Sigmoid colon (tissue), 7 donors: ENCODE measurements at regions of chr3 and their contacts with region 1.

Region 1: DNA sequence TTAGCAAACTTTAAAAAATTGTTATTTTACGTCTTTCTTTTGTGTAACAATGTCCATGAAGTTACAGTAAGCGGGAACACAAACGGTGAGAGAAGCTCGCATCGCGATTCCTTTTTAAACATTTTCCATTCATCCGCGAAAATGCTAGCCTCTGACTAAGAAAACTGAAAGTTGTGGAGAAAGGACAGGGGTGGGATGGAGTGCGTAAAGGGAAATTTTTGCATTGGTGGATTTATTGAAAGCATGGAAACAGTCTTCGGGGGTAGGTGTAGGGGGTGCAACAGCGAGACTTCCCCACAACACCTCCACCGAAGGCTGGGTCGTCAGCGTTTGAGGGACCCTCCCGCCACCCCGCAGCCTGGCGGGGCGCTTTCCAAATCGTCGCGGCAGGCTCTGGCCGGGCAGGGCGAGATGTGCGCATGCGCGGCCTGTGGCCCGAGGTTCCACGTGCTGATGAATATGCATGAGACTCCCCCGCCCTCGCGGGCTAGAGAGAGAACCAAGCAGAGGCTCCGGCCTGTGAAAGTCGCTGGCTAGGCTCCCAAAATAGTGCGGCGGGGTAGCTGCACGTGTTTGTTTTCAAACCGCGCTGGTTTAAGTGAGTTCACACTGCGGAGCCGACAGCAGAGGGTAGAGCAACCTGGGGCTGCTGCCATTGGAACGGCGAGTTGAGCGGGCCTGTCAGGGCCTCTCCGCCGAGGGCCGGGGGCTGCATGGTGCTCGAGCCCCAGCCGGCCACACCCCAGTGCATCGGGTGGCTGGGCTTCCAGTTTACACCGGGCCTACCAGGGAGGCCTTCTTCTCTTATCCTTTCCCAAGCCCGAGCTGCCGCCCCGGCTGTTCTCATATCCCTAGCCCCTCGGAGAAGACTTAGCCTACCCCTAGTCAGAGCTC is 9.9 kb downstream of the ZIC1 start:
- DNase-seq: no peak
- H3K4me3 ChIP-seq: peak overlapping the region in 2 of 4 donors; percentile 2 to 28
- H3K27ac ChIP-seq: no peak overlapping the region
- H3K4me1 ChIP-seq: peaks cover 0 to 34% (median 25%) of the 10 kb centered on the region in 4 donors
- H3K27me3 ChIP-seq: peaks cover 74 to 100% (median 96%) of the 10 kb centered on the region in 3 donors
- CTCF ChIP-seq: no peak
- EP300 ChIP-seq: no peak
- POLR2A ChIP-seq: no peak

Region 2: GRCh38 chr3:147099076-147099475 is 320.0 kb before region 1 on chr3:
- intact Hi-C with region 1: no loop called
- DNase-seq: no peak
- H3K4me3 ChIP-seq: no peak overlapping the region
- H3K27ac ChIP-seq: no peak overlapping the region
- H3K4me1 ChIP-seq: no peaks in the 10 kb centered on the region
- H3K27me3 ChIP-seq: no peaks in the 10 kb centered on the region
- CTCF ChIP-seq: no peak
- EP300 ChIP-seq: no peak
- POLR2A ChIP-seq: no peak

Region 3: DNA sequence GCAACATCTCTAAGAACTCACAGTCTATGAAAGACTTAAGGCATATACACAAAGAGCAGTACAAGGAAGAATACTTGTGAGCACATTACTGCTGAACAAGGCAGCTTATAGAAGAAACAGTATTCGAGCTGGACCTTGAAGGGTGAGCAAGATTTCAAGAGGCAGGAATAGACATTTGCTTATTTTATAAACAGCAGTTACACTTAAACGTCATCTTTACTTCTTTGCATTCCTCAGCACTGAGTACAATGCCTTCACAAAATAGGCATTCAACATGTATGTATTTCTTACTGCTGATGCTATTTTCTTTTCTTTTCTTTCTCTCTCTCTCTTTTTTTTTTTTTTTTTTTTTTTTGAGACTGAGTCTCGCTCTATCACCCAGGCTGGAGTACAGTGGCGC is 218.5 kb before region 1 on chr3:
- intact Hi-C with region 1: no loop called
- DNase-seq: no peak
- H3K4me3 ChIP-seq: no peak overlapping the region
- H3K27ac ChIP-seq: no peak overlapping the region
- H3K4me1 ChIP-seq: peaks cover 0 to 3% (median 0%) of the 10 kb centered on the region in 4 donors
- H3K27me3 ChIP-seq: no peaks in the 10 kb centered on the region
- CTCF ChIP-seq: no peak
- EP300 ChIP-seq: no peak
- POLR2A ChIP-seq: no peak

Region 4: DNA sequence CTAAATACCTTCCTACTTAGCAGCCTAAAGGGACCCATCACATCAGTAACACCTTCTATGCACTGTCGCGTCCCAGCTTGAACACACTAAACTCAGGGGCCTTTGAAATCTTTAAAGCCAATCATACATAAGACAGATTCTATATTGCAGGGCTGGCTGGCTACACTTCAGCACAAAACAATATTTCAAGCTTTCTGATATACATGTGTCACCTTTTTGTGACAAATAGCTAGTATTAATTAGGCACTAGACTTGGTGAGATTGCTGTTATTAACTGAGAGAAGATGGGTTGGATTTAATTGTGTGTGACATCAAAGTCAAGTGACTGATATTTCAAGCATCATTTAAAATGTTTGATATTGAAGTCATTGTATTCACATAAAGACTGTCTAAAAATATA is 161.1 kb before region 1 on chr3:
- intact Hi-C with region 1: no loop called
- DNase-seq: no peak
- H3K4me3 ChIP-seq: no peak overlapping the region
- H3K27ac ChIP-seq: no peak overlapping the region
- H3K4me1 ChIP-seq: peaks cover 0 to 13% (median 2%) of the 10 kb centered on the region in 4 donors
- H3K27me3 ChIP-seq: no peaks in the 10 kb centered on the region
- CTCF ChIP-seq: no peak
- EP300 ChIP-seq: no peak
- POLR2A ChIP-seq: no peak

Region 5: DNA sequence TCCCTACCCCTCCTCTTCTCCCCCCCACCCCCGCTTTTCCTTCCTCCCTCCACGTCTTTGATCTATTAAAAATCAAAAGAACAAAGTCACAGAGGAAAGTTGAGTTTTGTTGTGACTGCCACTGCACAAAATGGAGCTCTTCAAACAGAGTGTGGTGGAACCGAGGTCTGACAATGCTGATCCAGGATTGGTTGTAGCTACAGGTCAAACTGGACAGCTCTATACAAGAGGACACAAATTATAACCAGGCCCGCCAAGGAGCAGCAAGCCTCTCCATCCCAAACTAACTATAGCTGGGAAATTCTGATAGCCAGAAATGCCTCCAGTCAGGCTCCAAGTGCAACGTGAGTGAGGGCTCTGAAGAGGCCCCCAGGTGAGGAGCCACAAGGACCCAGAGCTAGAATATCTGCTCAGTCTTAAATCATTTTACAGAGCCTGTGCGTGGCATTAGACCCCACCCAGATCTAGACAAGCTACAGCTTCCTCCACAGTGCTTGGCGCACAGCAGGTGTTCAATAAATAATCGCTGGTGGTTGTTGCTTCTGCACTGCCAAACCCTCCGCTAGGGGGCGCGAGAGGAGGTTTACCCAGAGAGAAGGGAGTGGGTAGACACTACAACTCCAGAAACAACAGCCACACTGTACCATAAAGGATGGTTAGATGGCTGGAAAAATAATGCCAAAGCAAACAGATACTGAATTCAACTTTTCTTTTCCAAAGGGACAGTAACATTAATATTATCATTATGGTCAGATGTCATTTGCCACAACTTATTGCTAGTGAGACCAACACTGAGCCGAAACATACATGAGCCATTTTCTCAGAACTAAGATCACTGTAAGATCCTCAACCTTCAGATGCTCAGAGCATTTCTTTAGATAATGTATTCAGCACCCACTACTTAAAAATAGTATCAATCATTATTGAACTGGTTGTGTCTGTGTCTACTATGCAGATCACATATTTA is 57.3 kb before region 1 on chr3:
- intact Hi-C with region 1: loop called (anchors 5 kb)
- DNase-seq: no peak
- H3K4me3 ChIP-seq: no peak overlapping the region
- H3K27ac ChIP-seq: no peak overlapping the region
- H3K4me1 ChIP-seq: peaks cover 0 to 4% (median 0%) of the 10 kb centered on the region in 4 donors
- H3K27me3 ChIP-seq: peaks cover 49 to 99% (median 65%) of the 10 kb centered on the region in 3 donors
- CTCF ChIP-seq: peak in 1 of 4 experiments; percentile 29
- EP300 ChIP-seq: no peak
- POLR2A ChIP-seq: no peak

Region 6: DNA sequence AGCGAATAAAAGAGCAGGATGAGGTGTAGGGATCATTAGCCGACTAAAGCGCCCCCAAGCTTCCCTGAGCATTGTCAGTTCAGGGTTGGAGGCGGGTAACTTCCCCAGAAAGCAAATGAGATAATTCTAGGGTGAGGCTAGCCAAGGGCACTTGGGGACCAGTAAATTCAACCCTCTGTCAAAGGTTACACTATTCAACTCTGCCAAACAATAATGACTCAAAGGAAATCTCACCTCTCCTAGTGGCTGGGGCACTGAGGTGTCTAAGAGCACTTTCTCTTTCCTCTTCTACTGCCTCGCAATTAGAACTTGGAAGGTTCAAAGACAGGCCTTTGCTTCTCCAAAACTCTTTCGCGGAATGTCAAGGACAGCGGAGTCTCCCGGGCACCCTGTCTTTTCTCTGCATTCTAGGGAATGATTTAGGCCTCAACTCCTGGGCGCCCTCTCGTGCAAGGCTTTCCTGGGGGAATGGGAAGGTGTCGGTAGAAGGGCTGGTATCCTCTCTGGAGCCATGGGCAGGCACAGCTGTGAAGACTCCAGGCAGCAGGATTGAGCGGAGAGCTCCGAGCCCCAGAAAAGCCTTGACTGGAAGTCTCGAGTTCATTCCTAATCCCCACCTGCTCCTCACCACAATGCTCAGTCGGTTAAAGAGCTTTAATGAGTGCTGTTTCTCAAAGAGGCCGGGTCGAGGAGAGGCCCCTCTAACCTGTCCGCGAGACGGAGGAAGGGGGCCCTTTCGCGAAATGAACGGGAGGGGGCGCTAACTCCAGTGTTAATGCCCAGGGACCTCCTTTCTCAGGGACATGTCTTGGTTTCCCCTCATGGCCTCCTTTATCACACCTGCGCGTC is 34.6 kb before region 1 on chr3:
- intact Hi-C with region 1: loop called (anchors 5 kb)
- DNase-seq: no peak
- H3K4me3 ChIP-seq: no peak overlapping the region
- H3K27ac ChIP-seq: no peak overlapping the region
- H3K4me1 ChIP-seq: peaks cover 0 to 13% (median 0%) of the 10 kb centered on the region in 4 donors
- H3K27me3 ChIP-seq: peaks cover 68 to 100% (median 95%) of the 10 kb centered on the region in 3 donors
- CTCF ChIP-seq: no peak
- EP300 ChIP-seq: no peak
- POLR2A ChIP-seq: no peak